K562 (cell line): ENCODE measurements at regions of chr1 and their contacts with region 1.

Region 1: GRCh38 chr1:26853156-26853555 is 9.8 kb upstream of the SFN start:
- DNase-seq: peak; percentile 81 to 89 (median 87)
- ATAC-seq: peak; percentile 98
- H3K4me3 ChIP-seq: no peak overlapping the region
- H3K27ac ChIP-seq: no peak overlapping the region
- H3K4me1 ChIP-seq: peaks cover 0 to 15% of the 10 kb centered on the region in 2 experiments; a peak in 3 of 5 replicates
- H3K27me3 ChIP-seq: no peaks in the 10 kb centered on the region
- CTCF ChIP-seq: peak; percentile 92 to 98 (median 95)
- EP300 ChIP-seq: no peak
- POLR2A ChIP-seq: no peak
- RAD21 ChIP-seq: peak; percentile 74 to 88

Region 2: DNA sequence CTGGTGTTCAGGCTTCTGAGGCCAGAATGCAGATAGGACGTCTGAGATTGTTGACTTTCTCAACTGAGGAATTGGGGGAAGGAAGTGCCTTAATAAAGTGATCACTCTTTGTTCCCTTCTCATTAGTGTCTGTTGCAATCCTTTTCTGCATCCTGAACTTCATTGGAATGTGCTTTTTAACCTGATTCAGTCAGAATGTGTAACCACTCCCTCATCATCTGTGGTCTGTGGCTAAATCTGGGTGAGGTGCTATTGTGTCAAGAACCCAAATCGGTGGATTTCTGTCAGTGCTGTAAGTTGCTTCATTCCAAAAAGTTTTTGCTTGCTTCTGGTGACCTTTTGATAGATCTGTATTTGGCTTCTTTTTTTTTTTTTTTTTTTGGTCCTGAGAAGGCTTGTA is 119.2 kb before region 1 on chr1:
- CTCF ChIA-PET with region 1: no interaction called
- POLR2A ChIA-PET with region 1: no interaction called
- in situ Hi-C with region 1: no loop called
- intact Hi-C with region 1: no loop called
- DNase-seq: no peak
- ATAC-seq: no peak
- H3K4me3 ChIP-seq: no peak overlapping the region
- H3K27ac ChIP-seq: no peak overlapping the region
- H3K4me1 ChIP-seq: peaks cover 0 to 6% of the 10 kb centered on the region in 2 experiments; a peak in 1 of 5 replicates
- H3K27me3 ChIP-seq: no peaks in the 10 kb centered on the region
- CTCF ChIP-seq: no peak
- EP300 ChIP-seq: no peak
- POLR2A ChIP-seq: no peak
- RAD21 ChIP-seq: no peak

Region 3: DNA sequence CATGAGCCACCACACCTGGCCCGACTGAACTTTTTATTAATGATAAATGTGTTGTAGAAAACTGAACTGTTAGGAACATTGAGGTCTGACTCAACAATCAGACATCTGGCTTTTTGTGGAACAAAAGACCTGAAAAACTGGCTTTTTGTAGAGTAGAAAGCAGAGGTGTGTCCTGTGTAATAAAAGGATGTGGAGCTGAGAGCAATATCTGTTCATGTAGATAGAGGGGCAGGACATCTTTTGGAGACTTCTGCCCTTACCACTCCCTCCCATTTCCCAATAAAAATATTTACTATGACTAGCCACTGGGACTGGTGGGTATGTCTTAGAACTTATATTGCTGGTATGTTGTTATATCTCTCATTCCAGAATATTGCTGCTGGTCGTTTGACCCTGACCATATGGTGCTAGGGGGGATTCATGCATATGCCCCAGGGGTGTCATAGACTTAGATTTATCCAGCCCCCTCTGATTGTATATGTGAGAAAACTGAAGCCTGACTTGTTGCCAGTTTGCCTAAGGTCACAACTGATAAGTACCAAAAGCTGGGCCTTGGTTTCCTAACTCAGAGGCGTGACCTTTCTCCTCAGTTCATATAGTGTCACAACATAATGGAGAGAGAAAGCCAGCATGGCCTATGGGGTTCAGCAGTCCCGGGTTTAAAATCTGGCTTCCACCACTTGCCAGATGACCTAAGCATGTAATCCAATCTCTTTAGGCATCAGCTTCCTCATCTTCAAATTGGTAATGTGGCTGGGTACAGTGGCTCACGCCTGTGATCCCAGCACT is 98.9 kb before region 1 on chr1:
- CTCF ChIA-PET with region 1: no interaction called
- POLR2A ChIA-PET with region 1: no interaction called
- in situ Hi-C with region 1: no loop called
- intact Hi-C with region 1: no loop called
- DNase-seq: no peak
- ATAC-seq: no peak
- H3K4me3 ChIP-seq: no peak overlapping the region
- H3K27ac ChIP-seq: no peak overlapping the region
- H3K4me1 ChIP-seq: no peaks in the 10 kb centered on the region
- H3K27me3 ChIP-seq: no peaks in the 10 kb centered on the region
- CTCF ChIP-seq: no peak
- EP300 ChIP-seq: no peak
- POLR2A ChIP-seq: no peak
- RAD21 ChIP-seq: no peak

Region 4: DNA sequence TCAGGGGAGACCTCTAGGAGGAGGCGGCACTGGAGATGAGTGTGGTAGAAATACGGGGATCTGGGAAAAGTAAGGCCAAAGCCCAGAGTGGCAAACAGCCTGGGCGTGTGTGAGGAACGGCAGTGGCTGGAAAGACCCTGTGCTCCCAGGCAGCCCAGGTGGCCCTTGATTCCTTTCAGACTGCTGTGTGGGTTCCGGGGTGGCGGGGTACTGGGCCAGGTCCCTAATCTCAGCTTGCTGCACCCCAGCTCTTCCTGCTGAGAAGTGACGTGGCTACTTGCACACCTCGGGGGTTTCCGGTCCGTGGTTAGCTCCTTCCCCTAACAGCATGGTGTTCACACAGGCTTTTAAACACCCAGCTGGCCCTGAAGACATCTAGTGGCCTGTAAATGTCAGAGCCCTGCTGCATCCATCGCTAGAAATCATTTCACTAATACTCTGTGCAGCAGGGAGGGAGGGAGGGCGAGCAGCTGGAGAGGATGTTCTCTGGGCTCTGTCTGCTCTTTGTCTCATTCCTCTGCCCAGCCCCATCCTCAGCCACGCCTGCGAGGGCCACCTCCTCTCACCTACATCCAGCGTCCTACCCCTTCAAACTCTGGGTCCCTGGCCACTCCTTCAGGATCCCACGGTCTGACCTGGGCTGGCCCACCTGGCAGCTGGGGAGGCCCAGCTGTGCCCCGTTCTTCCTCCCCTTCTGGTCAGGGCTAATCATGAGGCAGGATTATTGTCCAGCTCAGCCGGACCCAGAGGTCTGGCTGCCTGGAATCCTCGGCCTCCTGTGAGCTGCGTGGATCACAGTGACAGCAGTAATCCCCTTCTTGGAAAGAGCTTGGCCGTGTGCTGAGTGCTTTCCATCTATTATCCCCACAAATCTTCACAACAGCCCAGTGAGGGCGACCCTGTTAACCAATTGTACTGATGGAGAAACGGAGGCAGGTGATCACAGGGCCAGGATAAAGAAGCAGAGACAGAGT is 19.4 kb before region 1 on chr1:
- CTCF ChIA-PET with region 1: no interaction called
- POLR2A ChIA-PET with region 1: interaction called, 10 read pairs
- in situ Hi-C with region 1: no loop called
- intact Hi-C with region 1: no loop called
- DNase-seq: no peak
- ATAC-seq: no peak
- H3K4me3 ChIP-seq: no peak overlapping the region
- H3K27ac ChIP-seq: no peak overlapping the region
- H3K4me1 ChIP-seq: peaks cover 14 to 20% of the 10 kb centered on the region in 2 experiments
- H3K27me3 ChIP-seq: no peaks in the 10 kb centered on the region
- CTCF ChIP-seq: no peak
- EP300 ChIP-seq: no peak
- POLR2A ChIP-seq: no peak
- RAD21 ChIP-seq: no peak

Region 5: DNA sequence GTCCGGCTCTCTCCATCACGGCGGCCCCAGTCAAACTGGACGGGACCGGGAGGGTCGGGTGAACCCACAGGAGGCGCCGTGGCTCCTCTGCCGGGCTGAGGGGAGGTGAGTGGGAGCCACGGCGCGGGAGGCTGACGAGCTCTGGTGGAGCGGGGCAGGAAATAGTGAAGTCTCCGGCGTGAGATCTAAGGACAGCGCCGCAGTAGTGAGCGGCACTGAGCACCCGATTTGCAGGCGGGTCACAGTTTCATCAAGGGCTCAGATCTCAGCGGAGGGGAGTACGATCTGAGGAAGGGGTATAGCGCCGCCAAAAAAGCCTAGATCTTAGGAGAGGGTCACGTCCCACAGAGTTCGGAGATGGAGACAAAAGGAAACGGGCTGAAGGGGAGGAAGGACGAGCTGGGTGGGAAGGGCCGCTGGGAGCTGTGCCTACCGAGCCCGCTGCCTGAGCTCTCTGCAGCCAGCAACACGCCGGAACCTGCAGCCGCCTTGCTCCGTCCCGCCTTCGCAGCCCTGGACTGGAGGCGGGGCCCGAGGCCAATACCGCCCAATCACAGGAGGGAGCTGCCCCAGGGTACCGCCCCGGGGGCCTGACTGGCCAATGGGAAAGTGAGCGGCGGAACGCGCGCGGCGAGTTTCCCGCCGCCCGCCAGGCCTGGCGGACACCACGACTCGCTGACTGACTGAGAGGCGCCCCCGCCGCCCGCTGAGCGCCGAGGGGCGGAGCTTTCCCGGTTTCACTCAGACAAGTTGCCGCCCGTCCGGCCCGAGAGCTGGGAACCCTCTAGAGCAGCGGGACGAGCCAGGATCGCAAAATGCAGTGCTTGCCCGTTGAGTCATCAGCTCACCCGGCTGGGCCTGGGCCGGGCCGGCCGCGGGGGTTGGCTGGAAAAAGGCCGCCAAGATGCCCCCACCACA is 11.7 kb after region 1 on chr1:
- CTCF ChIA-PET with region 1: interaction called, 3 read pairs
- POLR2A ChIA-PET with region 1: interaction called, 11 read pairs
- in situ Hi-C with region 1: no loop called
- intact Hi-C with region 1: no loop called
- DNase-seq: peak; percentile 99
- ATAC-seq: peak; percentile 96
- H3K4me3 ChIP-seq: peak overlapping the region; percentile 55
- H3K27ac ChIP-seq: peak overlapping the region; percentile 90
- H3K4me1 ChIP-seq: peaks cover 21 to 36% of the 10 kb centered on the region in 2 experiments
- H3K27me3 ChIP-seq: no peaks in the 10 kb centered on the region
- CTCF ChIP-seq: peak in 1 of 3 experiments; percentile 15; a peak in 2 of 6 replicates
- EP300 ChIP-seq: no peak
- POLR2A ChIP-seq: peak; percentile 97
- RAD21 ChIP-seq: no peak

Region 6: DNA sequence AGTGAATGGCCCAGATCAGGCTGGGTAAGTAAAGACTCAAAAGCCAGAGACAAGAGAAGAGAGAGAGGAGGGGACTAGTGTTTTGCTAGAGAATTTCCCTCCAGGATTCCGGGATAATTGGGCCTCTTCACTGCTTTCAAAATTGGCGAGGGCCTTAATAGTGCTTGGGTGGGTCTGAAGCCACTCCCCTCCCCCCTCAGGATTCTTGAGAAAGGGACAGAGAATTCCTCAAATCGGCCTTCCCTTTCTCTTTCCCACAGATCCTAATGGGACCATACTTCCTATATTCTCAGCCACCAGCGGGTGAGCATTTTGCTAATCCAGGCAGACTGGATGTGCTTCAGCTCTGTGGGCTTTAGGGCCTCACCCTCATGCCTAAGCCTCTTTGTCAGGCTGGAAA is 21.7 kb after region 1 on chr1:
- CTCF ChIA-PET with region 1: interaction called, 53 read pairs
- POLR2A ChIA-PET with region 1: interaction called, 3 read pairs
- in situ Hi-C with region 1: no loop called
- intact Hi-C with region 1: loop called (anchors 1 kb)
- DNase-seq: no peak
- ATAC-seq: no peak
- H3K4me3 ChIP-seq: no peak overlapping the region
- H3K27ac ChIP-seq: no peak overlapping the region
- H3K4me1 ChIP-seq: no peaks in the 10 kb centered on the region
- H3K27me3 ChIP-seq: no peaks in the 10 kb centered on the region
- CTCF ChIP-seq: no peak
- EP300 ChIP-seq: no peak
- POLR2A ChIP-seq: no peak
- RAD21 ChIP-seq: no peak